ENCODE measurements at regions of chr10 and their contacts with region 1.

Region 1: DNA sequence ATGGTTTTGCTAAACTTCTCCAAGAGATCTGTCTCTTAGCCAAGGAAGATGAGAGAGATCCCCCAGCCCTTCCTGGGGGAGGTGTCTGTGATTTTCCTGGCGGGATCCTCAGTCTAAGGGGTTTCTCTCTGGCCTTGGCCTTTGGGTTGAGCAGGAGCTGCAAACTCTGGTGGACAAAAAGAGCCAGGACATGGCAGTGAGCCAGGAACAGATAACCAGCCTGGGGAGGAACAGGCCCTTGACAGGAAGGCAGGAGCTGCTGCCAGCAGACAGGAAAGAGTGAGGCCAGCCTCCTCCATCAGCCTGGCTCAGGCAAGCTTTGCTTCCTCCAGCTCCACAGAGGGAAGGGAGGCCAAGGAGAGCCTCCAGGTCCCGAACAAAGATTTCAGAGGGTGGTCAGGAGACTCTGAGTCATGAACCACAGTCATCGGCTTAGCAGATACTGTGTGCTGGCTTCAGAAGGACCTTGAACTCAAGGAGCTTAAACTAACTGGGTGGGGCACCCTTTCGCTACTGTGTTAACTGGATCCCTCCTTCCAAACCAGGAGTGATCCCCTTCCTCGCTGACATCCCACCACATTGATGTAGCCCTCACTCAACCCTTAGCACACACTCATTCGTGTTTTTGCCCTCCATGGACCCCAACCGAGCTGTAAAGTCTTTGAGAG is 34.7 kb downstream of the DDIT4 start:
- DNase-seq: peak in 2 of 9 donors; percentile 12 to 47
- ATAC-seq: peak; percentile 65
- H3K4me3 ChIP-seq: no peak overlapping the region
- H3K4me3 Mint-ChIP-seq: peak overlapping the region in 7 of 10 donors; percentile 14 to 67 (median 49)
- H3K27ac ChIP-seq: peak overlapping the region; percentile 44
- H3K27ac Mint-ChIP-seq: peak overlapping the region; percentile 62 to 89 (median 80)
- H3K4me1 ChIP-seq: peaks cover 0 to 66% of the 10 kb centered on the region in 2 donors
- H3K4me1 Mint-ChIP-seq: peaks cover 43 to 89% (median 72%) of the 10 kb centered on the region in 7 donors
- H3K27me3 ChIP-seq: no peaks in the 10 kb centered on the region
- H3K27me3 Mint-ChIP-seq: no peaks in the 10 kb centered on the region

Region 2: DNA sequence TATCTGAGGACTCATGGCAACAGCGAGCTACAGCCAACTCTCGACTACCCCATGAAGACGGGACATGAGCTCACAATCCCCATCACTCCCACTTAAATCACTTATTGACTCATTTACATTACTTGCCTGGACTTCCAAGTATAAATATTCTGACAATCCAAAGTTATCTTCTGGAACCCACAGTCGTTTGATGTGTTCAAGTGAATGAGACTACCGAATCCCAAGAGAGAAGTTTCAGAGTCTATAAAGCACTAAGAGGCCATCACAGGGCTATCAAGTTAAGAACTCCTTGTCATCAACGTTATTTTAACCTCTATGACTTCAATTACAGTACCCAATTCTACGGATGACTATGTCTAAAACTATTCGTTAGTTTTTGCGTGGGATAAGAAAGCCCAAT is 104.2 kb before region 1 on chr10:
- CTCF ChIA-PET with region 1: no interaction called
- POLR2A ChIA-PET with region 1: no interaction called
- intact Hi-C with region 1: no loop called
- DNase-seq: no peak
- ATAC-seq: no peak
- H3K4me3 ChIP-seq: no peak overlapping the region
- H3K4me3 Mint-ChIP-seq: no peak overlapping the region
- H3K27ac ChIP-seq: no peak overlapping the region
- H3K27ac Mint-ChIP-seq: peak overlapping the region in 1 of 9 donors; percentile 25
- H3K4me1 ChIP-seq: peaks cover 0 to 9% of the 10 kb centered on the region in 2 donors
- H3K4me1 Mint-ChIP-seq: peaks cover 5 to 16% (median 13%) of the 10 kb centered on the region in 7 donors
- H3K27me3 ChIP-seq: no peaks in the 10 kb centered on the region
- H3K27me3 Mint-ChIP-seq: no peaks in the 10 kb centered on the region

Region 3: GRCh38 chr10:72292223-72292691 is 16.2 kb before region 1 on chr10:
- CTCF ChIA-PET with region 1: interaction called, 4 read pairs
- POLR2A ChIA-PET with region 1: interaction called, 21 read pairs
- intact Hi-C with region 1: no loop called
- DNase-seq: no peak
- ATAC-seq: no peak
- H3K4me3 ChIP-seq: no peak overlapping the region
- H3K4me3 Mint-ChIP-seq: peak overlapping the region in 8 of 10 donors; percentile 2 to 63 (median 40)
- H3K27ac ChIP-seq: peak overlapping the region; percentile 8
- H3K27ac Mint-ChIP-seq: peak overlapping the region; percentile 57 to 100 (median 83)
- H3K4me1 ChIP-seq: peaks cover 24 to 43% of the 10 kb centered on the region in 2 donors
- H3K4me1 Mint-ChIP-seq: peaks cover 39 to 66% (median 64%) of the 10 kb centered on the region in 7 donors
- H3K27me3 ChIP-seq: no peaks in the 10 kb centered on the region
- H3K27me3 Mint-ChIP-seq: no peaks in the 10 kb centered on the region

Region 4: GRCh38 chr10:72354478-72355213 is 46.2 kb after region 1 on chr10 and contains the start of gene DNAJB12:
- CTCF ChIA-PET with region 1: no interaction called
- POLR2A ChIA-PET with region 1: no interaction called
- intact Hi-C with region 1: no loop called
- DNase-seq: peak; percentile 90 to 96 (median 94)
- ATAC-seq: peak; percentile 94
- H3K4me3 ChIP-seq: peak within 1 kb of the TSS; percentile 98
- H3K4me3 Mint-ChIP-seq: peak within 1 kb of the TSS; percentile 93 to 99 (median 96)
- H3K27ac ChIP-seq: peak within 1 kb of the TSS; percentile 88
- H3K27ac Mint-ChIP-seq: peak within 1 kb of the TSS; percentile 93 to 100 (median 97)
- H3K4me1 ChIP-seq: peaks cover 8 to 13% of the 10 kb centered on the region in 2 donors
- H3K4me1 Mint-ChIP-seq: peaks cover 31 to 59% (median 46%) of the 10 kb centered on the region in 7 donors
- H3K27me3 ChIP-seq: no peaks in the 10 kb centered on the region
- H3K27me3 Mint-ChIP-seq: no peaks in the 10 kb centered on the region
- total RNA-seq, gene DNAJB12: 24.6 to 40.5 (median 36.2) TPM

Measured in naive thymus-derived CD4-positive, alpha-beta T cell (primary cell).